K562 (cell line): ENCODE measurements at regions of chr16 and their contacts with region 1.

Region 1: GRCh38 chr16:23678430-23679273 is at the start of gene PLK1:
- DNase-seq: peak; percentile 86 to 95 (median 91)
- ATAC-seq: peak; percentile 96
- H3K4me3 ChIP-seq: peak within 1 kb of the TSS; percentile 87
- H3K27ac ChIP-seq: peak within 1 kb of the TSS; percentile 99
- H3K4me1 ChIP-seq: peaks cover 19 to 28% of the 10 kb centered on the region in 2 experiments; a peak in 4 of 5 replicates
- H3K27me3 ChIP-seq: no peaks in the 10 kb centered on the region
- CTCF ChIP-seq: peak; percentile 62 to 63 (median 62)
- EP300 ChIP-seq: no peak
- POLR2A ChIP-seq: peak; percentile 85
- RAD21 ChIP-seq: peak; percentile 59 to 73
- polyA plus RNA-seq, gene PLK1: 13.6 to 24.8 TPM

Region 2: GRCh38 chr16:23274969-23275368 is 403.7 kb before region 1 on chr16:
- CTCF ChIA-PET with region 1: no interaction called
- POLR2A ChIA-PET with region 1: no interaction called
- in situ Hi-C with region 1: no loop called
- intact Hi-C with region 1: no loop called
- DNase-seq: peak in 3 of 4 experiments; percentile 20 to 32 (median 24)
- ATAC-seq: peak; percentile 95
- H3K4me3 ChIP-seq: no peak overlapping the region
- H3K27ac ChIP-seq: no peak overlapping the region
- H3K4me1 ChIP-seq: no peaks in the 10 kb centered on the region
- H3K27me3 ChIP-seq: peaks cover 0 to 8% of the 10 kb centered on the region in 2 experiments; a peak in 2 of 5 replicates
- CTCF ChIP-seq: no peak
- EP300 ChIP-seq: no peak
- POLR2A ChIP-seq: no peak
- RAD21 ChIP-seq: no peak

Region 3: GRCh38 chr16:23640931-23641765 is 37.5 kb before region 1 on chr16 and contains the starts of genes DCTN5 and PALB2:
- CTCF ChIA-PET with region 1: no interaction called
- POLR2A ChIA-PET with region 1: interaction called, 6 read pairs
- in situ Hi-C with region 1: no loop called
- intact Hi-C with region 1: loop called (anchors 2 kb)
- DNase-seq: peak; percentile 94 to 98 (median 95)
- ATAC-seq: peak; percentile 97
- H3K4me3 ChIP-seq: peak within 1 kb of the TSS; percentile 85
- H3K27ac ChIP-seq: peak within 1 kb of the TSS; percentile 89
- H3K4me1 ChIP-seq: peaks cover 8 to 15% of the 10 kb centered on the region in 2 experiments; a peak in 4 of 5 replicates
- H3K27me3 ChIP-seq: no peaks in the 10 kb centered on the region
- CTCF ChIP-seq: peak in 1 of 3 experiments; percentile 2; a peak in 1 of 6 replicates
- EP300 ChIP-seq: peak; percentile 41
- POLR2A ChIP-seq: peak; percentile 89
- RAD21 ChIP-seq: no peak; a peak in 1 of 4 replicates
- polyA plus RNA-seq, gene DCTN5: 45.2 to 123 TPM
- polyA plus RNA-seq, gene PALB2: 7.0 to 10.3 TPM

Region 4: GRCh38 chr16:23663918-23664317 is 14.7 kb before region 1 on chr16:
- CTCF ChIA-PET with region 1: no interaction called
- POLR2A ChIA-PET with region 1: interaction called, 66 read pairs
- in situ Hi-C with region 1: no loop called
- intact Hi-C with region 1: no loop called
- DNase-seq: no peak
- ATAC-seq: no peak
- H3K4me3 ChIP-seq: no peak overlapping the region
- H3K27ac ChIP-seq: no peak overlapping the region
- H3K4me1 ChIP-seq: peaks cover 4 to 24% of the 10 kb centered on the region in 2 experiments; a peak in 3 of 5 replicates
- H3K27me3 ChIP-seq: no peaks in the 10 kb centered on the region
- CTCF ChIP-seq: no peak
- EP300 ChIP-seq: no peak
- POLR2A ChIP-seq: no peak
- RAD21 ChIP-seq: no peak

Region 5: GRCh38 chr16:23691482-23692189 is 13.0 kb after region 1 on chr16:
- CTCF ChIA-PET with region 1: no interaction called
- POLR2A ChIA-PET with region 1: interaction called, 56 read pairs
- in situ Hi-C with region 1: no loop called
- intact Hi-C with region 1: no loop called
- DNase-seq: no peak
- ATAC-seq: no peak
- H3K4me3 ChIP-seq: no peak overlapping the region
- H3K27ac ChIP-seq: no peak overlapping the region
- H3K4me1 ChIP-seq: peaks cover 0 to 27% of the 10 kb centered on the region in 2 experiments; a peak in 3 of 5 replicates
- H3K27me3 ChIP-seq: no peaks in the 10 kb centered on the region
- CTCF ChIP-seq: no peak
- EP300 ChIP-seq: no peak
- POLR2A ChIP-seq: no peak
- RAD21 ChIP-seq: no peak

Region 6: GRCh38 chr16:23699100-23699499 is 20.4 kb after region 1 on chr16:
- CTCF ChIA-PET with region 1: no interaction called
- POLR2A ChIA-PET with region 1: interaction called, 56 read pairs
- in situ Hi-C with region 1: no loop called
- intact Hi-C with region 1: no loop called
- DNase-seq: no peak
- ATAC-seq: 0 out of 3 replicates have a peak, but pooled peaks have one; percentile 8
- H3K4me3 ChIP-seq: no peak overlapping the region
- H3K27ac ChIP-seq: no peak overlapping the region
- H3K4me1 ChIP-seq: peaks cover 13 to 19% of the 10 kb centered on the region in 2 experiments; a peak in 4 of 5 replicates
- H3K27me3 ChIP-seq: no peaks in the 10 kb centered on the region
- CTCF ChIP-seq: no peak
- EP300 ChIP-seq: no peak
- POLR2A ChIP-seq: no peak
- RAD21 ChIP-seq: no peak